ENCODE measurements at regions of chr22 and their contacts with region 1.

Region 1: DNA sequence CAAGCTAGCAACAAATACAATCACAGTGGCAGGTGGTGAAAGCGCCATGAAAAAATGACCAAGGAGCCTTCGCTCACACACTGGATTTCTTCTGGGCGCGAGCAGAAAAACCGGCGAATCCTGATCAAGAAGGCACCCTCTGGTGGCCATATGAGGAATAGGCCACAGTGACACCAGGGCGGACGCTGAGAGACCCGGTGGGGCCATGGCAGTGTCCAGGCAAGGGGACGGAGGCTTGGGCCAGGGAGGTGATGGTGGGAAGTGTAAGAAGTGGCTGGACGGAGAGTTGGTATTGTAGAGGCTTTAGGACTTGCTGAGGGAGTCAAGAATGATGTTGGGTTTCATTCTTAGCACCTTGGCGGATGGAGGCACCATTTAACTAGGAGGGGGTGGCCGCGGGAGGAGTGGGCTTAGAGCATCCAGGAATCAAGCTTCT is 16.9 kb upstream of the RAC2 start:
- DNase-seq: peak in 2 of 3 donors; percentile 53 to 58
- H3K4me3 ChIP-seq: no peak overlapping the region
- H3K27ac ChIP-seq: no peak overlapping the region
- H3K4me1 ChIP-seq: peaks cover 2 to 23% (median 15%) of the 10 kb centered on the region in 4 experiments
- H3K27me3 ChIP-seq: no peaks in the 10 kb centered on the region

Region 2: GRCh38 chr22:37218771-37219411 is 42.0 kb before region 1 on chr22:
- CTCF ChIA-PET with region 1: interaction called, 37 read pairs
- POLR2A ChIA-PET with region 1: no interaction called
- DNase-seq: peak; percentile 68 to 98 (median 96)
- H3K4me3 ChIP-seq: peak overlapping the region in 1 of 7 experiments; percentile 17
- H3K27ac ChIP-seq: no peak overlapping the region
- H3K4me1 ChIP-seq: peaks cover 9 to 69% (median 40%) of the 10 kb centered on the region in 4 experiments
- H3K27me3 ChIP-seq: no peaks in the 10 kb centered on the region

Region 3: GRCh38 chr22:37244114-37244921 is 16.6 kb before region 1 on chr22 and contains the start of gene RAC2:
- CTCF ChIA-PET with region 1: interaction called, 157 read pairs
- POLR2A ChIA-PET with region 1: interaction called, 4 read pairs
- DNase-seq: peak; percentile 93 to 99 (median 98)
- H3K4me3 ChIP-seq: peak within 1 kb of the TSS; percentile 67 to 99 (median 93)
- H3K27ac ChIP-seq: peak within 1 kb of the TSS; percentile 79 to 89
- H3K4me1 ChIP-seq: peaks cover 6 to 66% (median 58%) of the 10 kb centered on the region in 4 experiments
- H3K27me3 ChIP-seq: no peaks in the 10 kb centered on the region

Region 4: DNA sequence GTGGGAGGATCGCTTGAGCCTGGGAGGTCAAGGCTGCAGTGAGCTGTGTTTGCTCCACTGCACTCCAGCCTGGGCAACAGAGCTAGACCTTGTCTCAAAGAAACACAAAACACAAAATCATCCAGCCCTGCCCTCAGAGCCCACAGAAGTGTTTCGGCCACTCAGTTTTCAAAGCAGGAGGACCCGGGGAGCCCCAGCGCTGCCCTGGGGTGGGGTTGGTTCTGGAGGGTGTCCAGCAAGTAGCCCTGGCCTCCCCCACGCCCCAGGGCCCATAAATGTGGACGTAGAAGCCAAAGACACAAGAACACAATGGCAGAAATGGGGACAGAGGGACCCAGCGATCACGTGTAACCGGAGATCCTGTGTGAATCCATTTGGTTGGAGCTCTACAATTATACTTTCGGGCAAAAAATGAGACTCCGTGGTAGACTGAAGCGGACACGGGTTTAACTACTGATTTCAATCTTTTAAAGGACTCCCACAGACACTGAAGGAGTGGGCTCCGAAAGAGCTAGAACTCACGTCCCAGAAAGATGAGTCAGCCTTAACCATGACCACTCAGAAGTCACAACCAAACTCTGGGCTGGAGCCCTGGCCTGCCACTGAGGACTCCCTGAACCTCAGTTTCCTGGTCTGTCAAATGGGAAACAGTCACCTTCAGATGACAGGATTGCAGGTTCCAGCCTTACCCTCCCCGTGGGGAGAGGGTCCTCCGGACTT is 12.4 kb after region 1 on chr22:
- CTCF ChIA-PET with region 1: interaction called, 20 read pairs
- POLR2A ChIA-PET with region 1: no interaction called
- DNase-seq: peak in 2 of 3 donors; percentile 61 to 73
- H3K4me3 ChIP-seq: no peak overlapping the region
- H3K27ac ChIP-seq: peak overlapping the region in 1 of 2 experiments; percentile 9
- H3K4me1 ChIP-seq: peaks cover 22 to 89% (median 65%) of the 10 kb centered on the region in 4 experiments
- H3K27me3 ChIP-seq: no peaks in the 10 kb centered on the region

Region 5: DNA sequence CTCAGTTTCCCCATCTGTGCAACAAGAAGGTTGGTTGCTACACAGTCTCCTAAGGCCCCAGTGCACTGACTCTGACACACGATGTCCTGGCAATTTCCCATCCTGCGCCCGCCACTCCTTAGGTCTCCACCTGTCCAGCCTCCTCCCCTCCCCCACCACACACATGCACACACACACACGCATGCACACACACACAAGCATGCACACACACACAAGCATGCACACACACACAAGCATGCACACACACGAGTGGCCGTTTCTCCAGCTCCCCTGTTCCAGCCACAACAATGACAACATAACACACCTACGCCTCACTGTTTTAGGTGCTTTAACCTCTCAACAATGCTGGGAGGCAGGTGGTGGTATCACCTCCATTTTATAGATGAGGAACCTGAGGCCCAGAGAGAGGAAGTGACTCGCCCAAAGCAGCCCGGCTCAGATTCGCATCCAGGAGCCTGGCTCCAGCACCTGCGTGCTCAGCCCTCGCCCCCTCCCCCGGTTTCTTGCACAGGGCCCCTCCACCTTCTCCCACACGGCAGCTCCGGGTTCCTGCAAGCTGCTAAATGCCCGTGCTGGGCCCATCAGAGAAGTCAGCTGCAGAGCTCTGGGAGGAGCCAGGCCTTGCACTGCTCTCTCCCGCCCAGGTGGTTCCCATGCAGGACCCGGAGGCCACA is 34.4 kb after region 1 on chr22:
- CTCF ChIA-PET with region 1: interaction called, 13 read pairs
- POLR2A ChIA-PET with region 1: no interaction called
- DNase-seq: no peak
- H3K4me3 ChIP-seq: no peak overlapping the region
- H3K27ac ChIP-seq: no peak overlapping the region
- H3K4me1 ChIP-seq: peaks cover 17 to 62% (median 43%) of the 10 kb centered on the region in 4 experiments
- H3K27me3 ChIP-seq: no peaks in the 10 kb centered on the region

Region 6: GRCh38 chr22:37345863-37346504 is 85.1 kb after region 1 on chr22:
- CTCF ChIA-PET with region 1: no interaction called
- POLR2A ChIA-PET with region 1: no interaction called
- DNase-seq: no peak
- H3K4me3 ChIP-seq: no peak overlapping the region
- H3K27ac ChIP-seq: no peak overlapping the region
- H3K4me1 ChIP-seq: peaks cover 0 to 3% (median 0%) of the 10 kb centered on the region in 4 experiments
- H3K27me3 ChIP-seq: peaks cover 0 to 2% (median 0%) of the 10 kb centered on the region in 5 experiments

Region 7: GRCh38 chr22:37457093-37457893 is 196.4 kb after region 1 on chr22:
- CTCF ChIA-PET with region 1: interaction called, 35 read pairs
- POLR2A ChIA-PET with region 1: no interaction called
- DNase-seq: peak; percentile 59 to 77 (median 71)
- H3K4me3 ChIP-seq: no peak overlapping the region
- H3K27ac ChIP-seq: no peak overlapping the region
- H3K4me1 ChIP-seq: peaks cover 0 to 6% (median 3%) of the 10 kb centered on the region in 4 experiments
- H3K27me3 ChIP-seq: no peaks in the 10 kb centered on the region